ENCODE measurements at regions of chr14 and their contacts with region 1.

Region 1: GRCh38 chr14:74290415-74290814 is 12.3 kb downstream of the ABCD4 start:
- DNase-seq: peak; percentile 33
- ATAC-seq: peak; percentile 28
- H3K4me3 Mint-ChIP-seq: no peak overlapping the region
- H3K27ac Mint-ChIP-seq: no peak overlapping the region
- H3K4me1 Mint-ChIP-seq: peaks cover 4% of the 10 kb centered on the region; the same call in 1 of the 2 replicates
- H3K27me3 Mint-ChIP-seq: no peaks in the 10 kb centered on the region
- CTCF ChIP-seq: peak; percentile 77

Region 2: DNA sequence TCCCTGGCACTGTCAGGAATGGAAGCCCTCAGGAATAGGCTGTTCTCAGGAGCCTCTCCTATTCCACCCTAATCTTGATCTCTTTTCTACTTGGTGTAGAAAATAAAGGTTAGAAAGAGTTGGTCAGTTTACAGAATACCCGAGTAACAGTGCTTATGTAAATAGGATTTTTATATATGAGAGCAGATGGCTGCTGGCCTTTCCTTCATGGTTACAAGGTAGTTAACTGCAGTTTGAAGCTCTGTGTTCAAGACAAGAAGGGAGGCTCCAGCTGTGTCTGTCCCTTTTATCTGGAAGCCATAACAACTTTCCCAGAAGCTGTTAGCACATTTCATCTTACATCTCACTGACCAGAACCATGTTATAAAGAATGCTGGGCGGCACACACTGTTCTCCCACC is 248.1 kb before region 1 on chr14:
- CTCF ChIA-PET with region 1: no interaction called
- POLR2A ChIA-PET with region 1: no interaction called
- DNase-seq: no peak
- ATAC-seq: no peak
- H3K4me3 Mint-ChIP-seq: no peak overlapping the region
- H3K27ac Mint-ChIP-seq: no peak overlapping the region
- H3K4me1 Mint-ChIP-seq: no peaks in the 10 kb centered on the region
- H3K27me3 Mint-ChIP-seq: no peaks in the 10 kb centered on the region
- CTCF ChIP-seq: no peak

Region 3: GRCh38 chr14:74275241-74275841 is 15.1 kb before region 1 on chr14:
- CTCF ChIA-PET with region 1: interaction called, 19 read pairs
- POLR2A ChIA-PET with region 1: no interaction called
- DNase-seq: no peak
- ATAC-seq: no peak
- H3K4me3 Mint-ChIP-seq: no peak overlapping the region
- H3K27ac Mint-ChIP-seq: no peak overlapping the region
- H3K4me1 Mint-ChIP-seq: no peaks in the 10 kb centered on the region
- H3K27me3 Mint-ChIP-seq: peaks cover 3% of the 10 kb centered on the region
- CTCF ChIP-seq: no peak

Region 4: GRCh38 chr14:74302634-74303577 is 12.5 kb after region 1 on chr14 and contains the start of gene ABCD4:
- CTCF ChIA-PET with region 1: interaction called, 25 read pairs
- POLR2A ChIA-PET with region 1: interaction called, 4 read pairs
- DNase-seq: peak; percentile 99
- ATAC-seq: peak; percentile 99
- H3K4me3 Mint-ChIP-seq: peak within 1 kb of the TSS; percentile 96
- H3K27ac Mint-ChIP-seq: peak within 1 kb of the TSS; percentile 98
- H3K4me1 Mint-ChIP-seq: peaks cover 7% of the 10 kb centered on the region
- H3K27me3 Mint-ChIP-seq: no peaks in the 10 kb centered on the region
- CTCF ChIP-seq: no peak
- total RNA-seq, gene ABCD4: 84.7 to 91.2 TPM (median 90.2 TPM) in 3 replicates